ENCODE measurements at regions of chr3 and their contacts with region 1.

Region 1: DNA sequence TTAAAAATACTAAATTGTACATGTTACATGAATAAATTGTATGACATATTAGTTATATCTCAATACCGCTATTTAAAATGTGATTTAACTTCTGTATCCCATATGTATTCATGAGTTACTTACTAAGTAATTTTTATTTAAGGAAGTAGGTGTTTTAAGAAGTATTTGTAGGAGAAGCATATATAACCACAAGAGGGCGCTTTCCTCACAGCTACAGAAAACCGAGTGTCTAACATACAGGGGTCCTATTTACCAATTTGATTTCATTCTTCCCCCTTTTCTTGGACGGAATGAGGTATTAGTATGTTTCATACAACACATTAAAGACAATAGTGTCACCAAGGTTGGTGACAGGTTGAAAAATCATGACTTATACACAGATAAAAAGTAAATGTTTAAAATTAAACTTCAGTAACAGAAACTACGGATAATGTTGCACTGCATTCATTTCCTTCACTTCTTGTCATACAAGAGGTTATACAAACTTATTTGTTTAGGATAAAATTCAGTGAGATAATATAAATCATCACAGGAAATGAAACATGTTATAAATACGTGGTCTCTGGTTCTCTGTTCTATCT is 253.6 kb downstream of the MAGI1 start:
- DNase-seq: no peak
- ATAC-seq: peak; percentile 63
- H3K4me3 ChIP-seq: no peak overlapping the region
- H3K27ac ChIP-seq: no peak overlapping the region
- H3K4me1 ChIP-seq: no peaks in the 10 kb centered on the region
- H3K27me3 ChIP-seq: no peaks in the 10 kb centered on the region
- CTCF ChIP-seq: peak; percentile 44 to 56 (median 52); a peak in 5 of 6 replicates
- EP300 ChIP-seq: no peak
- POLR2A ChIP-seq: no peak
- RAD21 ChIP-seq: peak; percentile 74

Region 2: GRCh38 chr3:64903006-64903405 is 882.1 kb before region 1 on chr3:
- CTCF ChIA-PET with region 1: no interaction called
- POLR2A ChIA-PET with region 1: no interaction called
- RAD21 ChIA-PET with region 1: no interaction called
- SMC1A ChIA-PET with region 1: no interaction called
- in situ Hi-C with region 1: no loop called
- intact Hi-C with region 1: no loop called
- DNase-seq: no peak
- ATAC-seq: no peak
- H3K4me3 ChIP-seq: no peak overlapping the region
- H3K27ac ChIP-seq: no peak overlapping the region
- H3K4me1 ChIP-seq: no peaks in the 10 kb centered on the region
- H3K27me3 ChIP-seq: no peaks in the 10 kb centered on the region
- CTCF ChIP-seq: no peak
- EP300 ChIP-seq: no peak
- POLR2A ChIP-seq: no peak
- RAD21 ChIP-seq: no peak

Region 3: DNA sequence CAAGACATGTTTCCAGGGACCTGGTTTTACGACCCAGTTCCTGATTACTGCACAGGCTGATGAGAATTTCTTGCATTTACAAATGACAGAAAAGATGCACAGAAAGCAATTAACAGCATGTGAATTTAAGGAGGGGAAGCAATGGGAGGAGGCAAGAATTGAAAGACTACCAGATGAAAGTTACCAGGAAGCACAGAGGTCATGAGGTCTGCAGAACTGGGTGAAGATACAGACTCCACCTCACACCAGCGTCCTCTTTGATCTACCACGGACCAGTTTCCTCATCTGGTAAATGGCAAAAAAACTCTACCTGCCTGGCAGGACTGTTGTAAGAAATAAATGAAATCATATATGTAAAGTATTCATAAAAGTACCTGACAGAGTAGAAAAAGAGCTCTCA is 12.4 kb before region 1 on chr3:
- CTCF ChIA-PET with region 1: no interaction called
- POLR2A ChIA-PET with region 1: no interaction called
- RAD21 ChIA-PET with region 1: no interaction called
- SMC1A ChIA-PET with region 1: no interaction called
- in situ Hi-C with region 1: no loop called
- intact Hi-C with region 1: no loop called
- DNase-seq: no peak
- ATAC-seq: no peak
- H3K4me3 ChIP-seq: no peak overlapping the region
- H3K27ac ChIP-seq: no peak overlapping the region
- H3K4me1 ChIP-seq: no peaks in the 10 kb centered on the region
- H3K27me3 ChIP-seq: no peaks in the 10 kb centered on the region
- CTCF ChIP-seq: no peak
- EP300 ChIP-seq: no peak
- POLR2A ChIP-seq: no peak
- RAD21 ChIP-seq: no peak

Region 4: GRCh38 chr3:65914740-65915367 is 129.7 kb after region 1 on chr3:
- CTCF ChIA-PET with region 1: no interaction called
- POLR2A ChIA-PET with region 1: no interaction called
- RAD21 ChIA-PET with region 1: no interaction called
- SMC1A ChIA-PET with region 1: no interaction called
- in situ Hi-C with region 1: no loop called
- intact Hi-C with region 1: loop called (anchors 1 kb)
- DNase-seq: no peak
- ATAC-seq: peak; percentile 61
- H3K4me3 ChIP-seq: no peak overlapping the region
- H3K27ac ChIP-seq: no peak overlapping the region
- H3K4me1 ChIP-seq: no peaks in the 10 kb centered on the region
- H3K27me3 ChIP-seq: no peaks in the 10 kb centered on the region
- CTCF ChIP-seq: peak; percentile 1 to 15 (median 14); a peak in 2 of 6 replicates
- EP300 ChIP-seq: no peak
- POLR2A ChIP-seq: no peak
- RAD21 ChIP-seq: peak; percentile 33; the same call in 1 of the 2 replicates

Region 5: DNA sequence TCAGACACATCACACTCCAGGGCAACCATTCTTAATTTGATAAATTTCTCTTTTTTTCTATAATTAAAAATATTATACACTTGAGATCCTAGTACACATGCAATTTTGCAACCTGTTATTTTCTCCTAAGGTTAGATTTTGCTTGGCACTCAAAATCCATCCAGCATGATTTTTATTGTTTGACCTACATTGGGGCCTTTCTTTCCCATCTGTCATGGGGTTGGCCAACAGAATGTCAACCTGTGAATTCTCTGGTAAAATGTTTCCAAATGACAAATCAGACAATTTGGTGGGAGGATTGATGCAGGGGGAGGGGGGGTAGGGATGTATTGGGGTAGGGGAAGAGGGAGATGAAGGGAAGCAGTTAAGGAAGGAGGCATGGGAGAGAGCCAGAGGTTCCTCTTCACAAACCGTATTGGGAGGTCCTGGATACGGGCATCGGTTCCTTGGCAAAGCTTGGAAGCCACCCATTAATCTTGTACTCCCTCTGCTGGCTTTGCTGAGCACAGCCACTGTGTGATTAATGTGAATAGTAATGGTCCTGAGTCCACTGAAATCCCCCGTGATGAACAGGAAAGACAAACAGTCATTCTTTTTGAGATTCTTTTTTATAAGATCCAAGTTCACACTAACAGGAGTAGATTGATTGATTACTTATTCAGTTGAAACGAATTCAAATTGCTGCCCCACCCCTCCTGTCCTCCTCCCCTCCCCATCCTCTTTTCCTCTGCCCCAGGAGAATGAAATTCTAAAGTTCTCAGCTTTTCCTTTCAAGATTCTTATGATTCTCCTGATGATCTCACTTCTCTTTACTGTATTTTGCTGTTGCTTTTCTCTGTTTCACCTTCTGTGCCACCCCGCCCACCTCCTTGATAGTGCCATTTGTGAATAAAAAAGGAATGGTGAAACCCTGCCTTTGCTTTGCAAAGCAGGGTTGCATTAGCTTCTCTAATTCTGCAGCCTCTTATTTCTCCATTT is 353.5 kb after region 1 on chr3:
- CTCF ChIA-PET with region 1: no interaction called
- POLR2A ChIA-PET with region 1: no interaction called
- RAD21 ChIA-PET with region 1: no interaction called
- SMC1A ChIA-PET with region 1: interaction called, 3 read pairs
- in situ Hi-C with region 1: loop called (anchors 10 kb)
- intact Hi-C with region 1: loop called (anchors 1 kb)
- DNase-seq: no peak
- ATAC-seq: peak; percentile 80
- H3K4me3 ChIP-seq: no peak overlapping the region
- H3K27ac ChIP-seq: no peak overlapping the region
- H3K4me1 ChIP-seq: no peaks in the 10 kb centered on the region
- H3K27me3 ChIP-seq: no peaks in the 10 kb centered on the region
- CTCF ChIP-seq: peak; percentile 52 to 57 (median 55); a peak in 5 of 6 replicates
- EP300 ChIP-seq: no peak
- POLR2A ChIP-seq: no peak
- RAD21 ChIP-seq: peak; percentile 64